H1 (cell line): ENCODE measurements at regions of chr10 and their contacts with region 1.

Region 1: DNA sequence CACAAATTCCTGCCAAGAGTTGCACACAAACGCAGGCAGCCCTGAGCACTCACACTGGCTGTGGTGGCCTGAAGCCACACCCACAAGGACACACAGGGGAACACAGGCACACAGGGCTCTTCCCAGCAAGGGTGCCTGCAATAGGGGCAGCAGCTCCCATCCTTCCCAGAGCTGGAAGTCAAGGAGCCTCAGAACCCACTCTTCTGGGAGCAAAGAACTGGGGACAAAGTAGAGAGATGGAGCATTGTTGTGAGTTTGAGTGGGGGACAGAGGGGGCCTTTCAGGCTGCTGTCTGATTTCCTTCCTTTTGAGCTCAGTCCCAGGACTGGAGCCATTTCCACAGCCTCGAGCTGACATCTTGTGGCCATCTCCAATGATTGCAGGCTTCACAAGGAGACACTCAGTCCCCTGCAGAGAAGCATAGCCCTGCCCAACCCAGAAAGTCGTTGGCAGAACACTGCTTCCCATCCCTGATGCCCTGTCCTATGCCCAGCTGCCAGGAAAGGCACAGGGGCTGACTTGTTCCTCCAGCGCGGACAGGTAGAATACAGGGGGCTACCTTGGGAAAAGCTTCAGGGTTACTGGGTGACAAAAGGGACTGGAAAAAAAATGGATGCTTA is 34.4 kb upstream of the SLF2 start:
- DNase-seq: peak; percentile 31 to 71
- H3K4me3 ChIP-seq: no peak overlapping the region
- H3K27ac ChIP-seq: no peak overlapping the region
- H3K4me1 ChIP-seq: peaks cover 0 to 12% (median 7%) of the 10 kb centered on the region in 4 experiments; a peak in 5 of 7 replicates
- H3K27me3 ChIP-seq: peaks cover 0 to 13% (median 6%) of the 10 kb centered on the region in 4 experiments; a peak in 4 of 7 replicates
- CTCF ChIP-seq: peak; percentile 66 to 90 (median 85)
- EP300 ChIP-seq: no peak
- POLR2A ChIP-seq: no peak
- RAD21 ChIP-seq: peak; percentile 97 to 98

Region 2: DNA sequence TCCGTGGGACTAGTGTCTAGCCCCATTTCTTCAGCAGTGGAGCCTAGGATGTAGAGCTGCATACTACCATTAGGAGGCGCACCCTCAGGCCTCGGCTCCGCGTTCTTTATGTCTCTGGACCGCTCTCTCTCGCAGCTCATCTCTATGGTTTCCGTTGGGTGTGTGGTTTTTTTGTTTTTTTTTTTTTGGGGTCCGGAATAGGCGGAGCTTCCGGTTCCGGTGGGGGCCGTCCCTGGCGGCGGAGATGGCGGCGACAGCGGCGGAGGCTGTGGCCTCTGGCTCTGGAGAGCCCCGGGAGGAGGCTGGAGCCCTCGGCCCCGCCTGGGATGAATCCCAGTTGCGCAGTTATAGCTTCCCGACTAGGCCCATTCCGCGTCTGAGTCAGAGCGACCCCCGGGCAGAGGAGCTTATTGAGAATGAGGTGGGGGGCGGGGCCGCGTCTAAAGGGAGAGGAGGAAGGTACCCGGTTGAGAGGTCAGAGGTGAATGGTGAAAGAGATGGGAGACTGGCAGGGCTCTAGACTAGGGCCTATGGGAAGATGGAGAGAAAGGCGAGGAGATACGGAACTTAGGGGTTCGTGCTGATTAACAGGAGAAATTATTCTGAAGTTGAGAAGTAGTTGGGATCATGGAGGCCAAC is 342.6 kb before region 1 on chr10 and contains the start of gene HIF1AN:
- CTCF ChIA-PET with region 1: interaction called, 14 read pairs
- POLR2A ChIA-PET with region 1: no interaction called
- DNase-seq: peak; percentile 84 to 87
- H3K4me3 ChIP-seq: peak within 1 kb of the TSS; percentile 59 to 94 (median 91)
- H3K27ac ChIP-seq: no peak within 1 kb of the TSS
- H3K4me1 ChIP-seq: peaks cover 0 to 9% (median 5%) of the 10 kb centered on the region in 4 experiments; a peak in 5 of 7 replicates
- H3K27me3 ChIP-seq: no peaks in the 10 kb centered on the region
- CTCF ChIP-seq: peak; percentile 90 to 94 (median 91)
- EP300 ChIP-seq: no peak
- POLR2A ChIP-seq: peak; percentile 77 to 90
- RAD21 ChIP-seq: peak in 1 of 2 experiments; percentile 4; a peak in 1 of 4 replicates
- total RNA-seq, gene HIF1AN: 59.7 and 62.8 TPM in 2 replicates

Region 3: DNA sequence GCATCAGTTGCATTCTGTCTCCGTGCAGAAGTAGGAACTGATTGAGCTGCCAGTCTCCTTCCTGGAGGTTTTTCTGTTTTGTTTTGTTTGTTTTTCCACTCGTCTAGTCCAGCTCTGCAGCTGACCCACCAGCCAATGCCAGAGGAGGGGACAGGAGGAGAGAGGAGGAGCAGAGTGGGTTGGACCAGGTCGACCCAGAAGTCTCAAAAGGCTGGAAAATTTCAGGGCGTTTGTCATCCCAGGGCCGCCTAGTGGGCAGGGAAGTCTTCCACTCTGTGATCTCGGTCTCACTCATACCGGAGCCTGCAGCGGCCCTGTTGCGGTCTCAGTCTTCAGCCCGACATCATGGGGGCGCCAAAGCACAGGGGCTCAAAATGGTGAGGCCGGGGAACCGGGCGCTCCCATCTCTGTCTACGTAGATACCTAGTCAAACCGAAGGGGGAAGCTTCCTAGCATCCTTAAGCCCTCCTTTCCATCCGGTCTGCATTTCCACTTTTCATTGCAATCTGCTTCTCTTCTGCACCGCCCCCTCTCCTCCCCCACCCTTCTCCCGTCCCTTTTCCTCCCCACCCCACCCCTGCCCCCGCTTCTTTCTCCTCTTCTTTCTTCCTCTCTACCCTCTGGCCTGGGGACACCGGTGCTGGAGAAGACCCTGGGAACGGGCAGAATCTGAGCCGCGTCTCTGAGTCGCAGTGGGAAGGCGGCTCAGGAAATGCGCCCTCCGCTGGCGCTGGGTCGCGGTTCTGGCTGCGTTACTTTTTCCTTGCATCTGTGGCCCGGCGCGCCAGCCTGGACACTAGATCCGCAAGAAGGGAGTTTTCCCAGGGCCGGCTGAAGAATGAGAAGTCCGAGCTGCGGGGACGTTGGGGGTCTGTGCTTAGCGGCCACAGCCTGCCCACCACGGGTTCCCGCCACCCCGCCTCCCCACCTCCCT is 149.2 kb before region 1 on chr10:
- CTCF ChIA-PET with region 1: interaction called, 18 read pairs
- POLR2A ChIA-PET with region 1: no interaction called
- DNase-seq: peak in 1 of 2 experiments; percentile 79
- H3K4me3 ChIP-seq: peak overlapping the region in 1 of 4 experiments; percentile 48; a peak in 2 of 8 replicates
- H3K27ac ChIP-seq: no peak overlapping the region
- H3K4me1 ChIP-seq: peaks cover 4 to 20% (median 11%) of the 10 kb centered on the region in 4 experiments
- H3K27me3 ChIP-seq: peaks cover 94 to 99% (median 97%) of the 10 kb centered on the region in 4 experiments
- CTCF ChIP-seq: peak; percentile 58 to 72 (median 69)
- EP300 ChIP-seq: no peak
- POLR2A ChIP-seq: no peak
- RAD21 ChIP-seq: peak; percentile 50 to 64

Region 4: DNA sequence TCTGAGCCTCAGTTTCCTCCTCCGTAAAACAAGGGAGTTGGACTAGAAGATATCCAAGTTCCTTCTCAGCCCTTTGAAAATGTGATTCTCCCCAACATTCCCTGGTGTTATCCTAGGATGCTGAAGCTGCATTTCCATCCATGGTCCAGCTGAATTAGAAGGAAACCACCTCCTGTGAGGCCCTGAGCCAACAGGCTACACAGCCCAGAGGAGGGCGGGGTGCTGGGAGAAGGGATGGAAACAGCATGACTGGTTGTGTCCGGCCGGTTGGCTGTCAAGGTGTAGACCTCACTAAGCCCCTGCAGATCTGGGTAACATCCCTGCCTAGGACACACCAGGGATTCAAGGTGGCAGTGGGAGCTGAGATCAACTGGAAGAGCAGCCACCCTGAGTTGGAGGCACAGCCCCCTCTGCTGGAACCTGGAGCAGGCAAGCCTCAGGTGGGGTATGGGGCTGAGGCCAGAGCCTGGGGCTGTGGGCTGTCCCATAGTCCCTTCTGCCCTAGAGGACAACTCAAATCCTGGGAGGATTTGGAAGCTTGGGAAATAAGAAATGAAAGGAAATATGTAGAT is 61.0 kb before region 1 on chr10:
- CTCF ChIA-PET with region 1: interaction called, 26 read pairs
- POLR2A ChIA-PET with region 1: no interaction called
- DNase-seq: no peak
- H3K4me3 ChIP-seq: no peak overlapping the region
- H3K27ac ChIP-seq: no peak overlapping the region
- H3K4me1 ChIP-seq: peaks cover 0 to 5% (median 1%) of the 10 kb centered on the region in 4 experiments; a peak in 1 of 7 replicates
- H3K27me3 ChIP-seq: peaks cover 6 to 41% (median 18%) of the 10 kb centered on the region in 4 experiments
- CTCF ChIP-seq: peak; percentile 84 to 87 (median 86)
- EP300 ChIP-seq: no peak
- POLR2A ChIP-seq: no peak
- RAD21 ChIP-seq: peak; percentile 88 to 94

Region 5: GRCh38 chr10:100858747-100859483 is 19.5 kb before region 1 on chr10:
- CTCF ChIA-PET with region 1: interaction called, 35 read pairs
- POLR2A ChIA-PET with region 1: interaction called, 3 read pairs
- DNase-seq: no peak
- H3K4me3 ChIP-seq: no peak overlapping the region
- H3K27ac ChIP-seq: no peak overlapping the region
- H3K4me1 ChIP-seq: no peaks in the 10 kb centered on the region; a peak in 1 of 7 replicates
- H3K27me3 ChIP-seq: peaks cover 0 to 8% (median 5%) of the 10 kb centered on the region in 4 experiments; a peak in 4 of 7 replicates
- CTCF ChIP-seq: no peak
- EP300 ChIP-seq: no peak
- POLR2A ChIP-seq: no peak
- RAD21 ChIP-seq: no peak

Region 6: GRCh38 chr10:100890673-100891317 is 12.4 kb after region 1 on chr10:
- CTCF ChIA-PET with region 1: interaction called, 110 read pairs
- POLR2A ChIA-PET with region 1: interaction called, 6 read pairs
- DNase-seq: peak in 1 of 2 experiments; percentile 33
- H3K4me3 ChIP-seq: no peak overlapping the region
- H3K27ac ChIP-seq: no peak overlapping the region
- H3K4me1 ChIP-seq: peaks cover 0 to 8% (median 3%) of the 10 kb centered on the region in 4 experiments; a peak in 3 of 7 replicates
- H3K27me3 ChIP-seq: no peaks in the 10 kb centered on the region
- CTCF ChIP-seq: no peak
- EP300 ChIP-seq: no peak
- POLR2A ChIP-seq: no peak
- RAD21 ChIP-seq: no peak

Region 7: DNA sequence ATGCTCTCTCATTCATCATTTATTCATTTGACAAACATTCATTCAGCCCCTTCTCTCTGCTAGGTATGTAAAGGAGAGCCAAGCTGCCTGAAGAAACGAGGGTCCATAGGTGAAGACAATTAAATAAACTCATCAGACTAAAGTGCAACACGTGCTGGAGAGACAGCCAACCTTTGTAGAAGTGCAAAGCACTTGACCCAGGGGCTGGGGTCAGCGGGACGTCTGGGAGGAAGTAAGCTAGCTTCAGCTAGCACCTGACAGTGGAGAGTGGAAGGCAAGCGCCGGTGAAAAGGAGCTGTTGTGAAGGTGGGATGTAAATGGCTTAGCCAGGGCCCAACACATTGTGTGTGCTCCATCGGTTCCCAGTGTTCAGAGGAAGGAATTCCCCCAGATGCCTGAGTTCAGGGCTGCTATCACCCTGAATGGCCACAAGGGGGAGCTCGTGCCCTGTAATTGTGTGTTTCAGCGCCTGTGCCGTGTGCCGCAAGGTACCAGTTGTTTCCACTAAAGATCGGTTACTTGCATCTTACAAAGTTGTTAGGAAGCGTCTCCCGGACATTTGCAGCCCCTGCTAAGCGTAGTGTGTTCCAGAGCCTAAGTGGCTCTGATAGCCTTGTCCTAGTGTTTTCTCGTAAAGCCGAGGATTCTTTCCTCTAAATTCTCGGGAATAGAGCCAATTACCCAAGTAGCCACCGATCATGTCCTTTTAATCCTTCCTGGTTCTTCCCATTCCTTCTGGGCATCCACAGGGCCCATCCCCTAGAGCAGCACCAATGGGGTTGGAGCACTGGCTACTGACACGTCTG is 283.3 kb after region 1 on chr10:
- CTCF ChIA-PET with region 1: no interaction called
- POLR2A ChIA-PET with region 1: no interaction called
- DNase-seq: peak; percentile 77 to 88
- H3K4me3 ChIP-seq: peak overlapping the region in 1 of 4 experiments; percentile 48; a peak in 4 of 8 replicates
- H3K27ac ChIP-seq: no peak overlapping the region
- H3K4me1 ChIP-seq: peaks cover 0 to 7% (median 1%) of the 10 kb centered on the region in 4 experiments; a peak in 1 of 7 replicates
- H3K27me3 ChIP-seq: peaks cover 0 to 13% (median 10%) of the 10 kb centered on the region in 4 experiments; a peak in 5 of 7 replicates
- CTCF ChIP-seq: peak; percentile 96 to 100 (median 97)
- EP300 ChIP-seq: 0 out of 3 replicates have a peak, but pooled peaks of 1 of the 2 experiments have one; percentile 17
- POLR2A ChIP-seq: no peak
- RAD21 ChIP-seq: peak; percentile 94 to 97